Caco-2 (cell line): ENCODE measurements at regions of chr10 and their contacts with region 1.

Region 1: DNA sequence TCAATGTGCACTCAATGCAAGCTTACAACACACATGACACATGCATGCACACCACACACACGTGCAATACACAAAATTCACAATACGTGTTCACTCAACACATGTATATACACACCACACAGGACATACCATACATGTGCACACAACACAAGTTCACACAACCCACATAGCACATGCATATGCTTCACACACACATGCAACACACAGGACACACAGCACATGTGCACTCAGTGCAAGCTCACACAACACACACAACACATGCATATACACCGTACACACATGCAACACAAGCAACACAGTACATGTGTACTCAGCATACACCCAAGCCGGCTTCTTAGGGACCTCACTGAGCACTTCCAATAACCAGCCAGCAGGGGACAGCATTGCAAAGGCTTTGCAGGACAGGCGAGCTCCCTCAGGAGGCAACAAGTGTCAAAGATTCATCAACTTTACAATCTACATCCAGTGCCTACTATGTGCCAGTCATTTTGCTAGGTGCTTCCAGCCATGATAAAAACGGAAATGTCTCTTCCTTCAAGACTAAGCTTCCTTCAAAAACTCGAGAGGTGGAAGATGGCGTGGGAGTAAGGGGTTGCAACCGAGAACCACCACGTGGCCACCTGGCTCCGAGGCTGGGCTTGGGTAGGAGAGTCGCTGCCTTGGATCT is 61.1 kb downstream of the JCAD start:
- DNase-seq: peak; percentile 87 to 90
- H3K4me3 ChIP-seq: no peak overlapping the region
- H3K4me3 Mint-ChIP-seq: no peak overlapping the region
- H3K27ac Mint-ChIP-seq: no peak overlapping the region
- H3K4me1 ChIP-seq: peaks cover 40% of the 10 kb centered on the region
- H3K4me1 Mint-ChIP-seq: peaks cover 48% of the 10 kb centered on the region
- H3K27me3 ChIP-seq: no peaks in the 10 kb centered on the region
- H3K27me3 Mint-ChIP-seq: no peaks in the 10 kb centered on the region
- CTCF ChIP-seq: peak; percentile 100

Region 2: DNA sequence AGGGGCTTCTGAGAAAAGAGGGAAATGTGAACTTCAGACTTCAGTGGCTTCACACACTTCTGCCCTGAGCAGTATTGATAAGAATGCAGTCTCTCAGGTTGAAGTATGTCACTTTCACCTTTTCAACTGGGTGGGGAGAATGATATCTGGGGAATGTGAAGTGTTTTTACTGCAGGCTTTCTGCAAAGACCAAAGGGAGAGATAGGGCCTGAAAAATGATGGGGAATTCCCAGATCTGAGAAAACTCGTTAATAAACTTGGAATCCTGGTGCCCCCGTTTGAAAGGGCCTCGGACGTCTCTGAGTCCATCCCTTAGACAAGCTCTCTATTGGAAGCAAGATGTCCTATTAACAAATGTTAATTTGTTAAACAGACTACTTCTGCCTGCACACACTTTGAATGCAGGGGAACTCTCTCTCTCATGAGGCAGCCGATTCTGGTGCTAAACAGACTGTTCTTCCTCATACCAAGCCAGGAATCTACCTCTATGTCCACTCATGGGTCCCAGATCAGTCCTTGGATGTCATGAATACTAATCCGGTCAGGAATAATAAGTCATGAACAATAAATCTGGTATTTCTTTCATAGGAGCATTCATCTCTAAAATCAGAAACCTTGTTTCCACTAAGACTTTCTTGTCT is 132.5 kb before region 1 on chr10:
- CTCF ChIA-PET with region 1: interaction called, 3 read pairs
- POLR2A ChIA-PET with region 1: no interaction called
- intact Hi-C with region 1: loop called (anchors 5 kb)
- DNase-seq: peak; percentile 89 to 92
- H3K4me3 ChIP-seq: no peak overlapping the region
- H3K4me3 Mint-ChIP-seq: peak overlapping the region; percentile 42
- H3K27ac Mint-ChIP-seq: peak overlapping the region; percentile 95
- H3K4me1 ChIP-seq: peaks cover 64% of the 10 kb centered on the region
- H3K4me1 Mint-ChIP-seq: peaks cover 47% of the 10 kb centered on the region
- H3K27me3 ChIP-seq: no peaks in the 10 kb centered on the region
- H3K27me3 Mint-ChIP-seq: no peaks in the 10 kb centered on the region
- CTCF ChIP-seq: no peak

Region 3: GRCh38 chr10:29946953-29947700 is 51.1 kb before region 1 on chr10:
- CTCF ChIA-PET with region 1: no interaction called
- POLR2A ChIA-PET with region 1: no interaction called
- intact Hi-C with region 1: no loop called
- DNase-seq: peak in 1 of 2 experiments; percentile 13
- H3K4me3 ChIP-seq: no peak overlapping the region
- H3K4me3 Mint-ChIP-seq: no peak overlapping the region
- H3K27ac Mint-ChIP-seq: no peak overlapping the region
- H3K4me1 ChIP-seq: peaks cover 4% of the 10 kb centered on the region; the same call in 1 of the 2 replicates
- H3K4me1 Mint-ChIP-seq: no peaks in the 10 kb centered on the region
- H3K27me3 ChIP-seq: no peaks in the 10 kb centered on the region
- H3K27me3 Mint-ChIP-seq: no peaks in the 10 kb centered on the region
- CTCF ChIP-seq: no peak

Region 4: DNA sequence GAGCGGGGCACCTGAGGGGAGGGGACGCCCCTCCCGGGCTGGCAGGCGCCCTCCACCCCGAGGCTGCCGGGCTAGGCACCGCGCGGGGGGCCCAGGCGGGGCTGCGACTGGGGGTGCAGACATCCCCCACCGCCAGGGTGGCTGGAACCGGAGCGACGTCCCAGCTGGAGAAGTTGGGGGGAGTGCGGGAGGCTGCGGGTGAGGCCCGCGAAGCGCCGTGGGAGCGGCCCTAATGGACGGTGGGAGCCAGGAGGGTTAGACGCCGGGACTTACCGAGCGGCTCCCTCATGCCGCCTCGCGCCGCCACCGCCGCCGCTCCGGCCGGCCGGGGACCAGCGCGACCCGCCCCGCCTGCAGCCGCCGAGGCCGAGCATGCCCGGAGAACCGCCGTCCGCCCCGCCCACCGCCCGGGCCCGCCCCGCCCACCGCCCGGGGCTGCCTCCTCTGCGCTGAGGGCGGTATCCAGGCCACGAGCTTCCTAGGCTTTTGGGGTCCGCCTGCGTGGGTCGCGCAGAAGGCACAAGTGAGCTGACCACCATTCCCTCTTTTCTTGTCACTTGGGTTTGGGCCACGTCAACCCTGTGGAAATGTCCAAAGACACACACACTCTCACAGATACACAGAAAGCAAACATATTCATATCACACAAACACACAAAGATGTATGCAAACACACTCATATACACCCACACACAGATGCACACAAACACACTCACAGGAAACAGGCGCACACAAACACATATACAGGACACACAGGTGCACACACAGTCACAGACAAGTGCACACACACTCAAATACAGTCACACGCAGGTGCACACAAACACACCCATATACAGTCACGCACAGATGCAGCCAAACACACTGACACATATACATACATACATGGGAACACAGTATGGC is 61.2 kb after region 1 on chr10 and contains the start of gene JCAD:
- CTCF ChIA-PET with region 1: interaction called, 7 read pairs
- POLR2A ChIA-PET with region 1: no interaction called
- intact Hi-C with region 1: loop called (anchors 2 kb)
- DNase-seq: peak; percentile 80 to 90
- H3K4me3 ChIP-seq: peak within 1 kb of the TSS; percentile 81
- H3K4me3 Mint-ChIP-seq: peak within 1 kb of the TSS; percentile 78
- H3K27ac Mint-ChIP-seq: peak within 1 kb of the TSS; percentile 54
- H3K4me1 ChIP-seq: peaks cover 46% of the 10 kb centered on the region
- H3K4me1 Mint-ChIP-seq: peaks cover 46% of the 10 kb centered on the region
- H3K27me3 ChIP-seq: no peaks in the 10 kb centered on the region
- H3K27me3 Mint-ChIP-seq: no peaks in the 10 kb centered on the region
- CTCF ChIP-seq: no peak
- total RNA-seq, gene JCAD: 10.0 and 13.0 TPM in 2 replicates

Region 5: GRCh38 chr10:30186371-30186875 is 188.1 kb after region 1 on chr10:
- CTCF ChIA-PET with region 1: interaction called, 7 read pairs
- POLR2A ChIA-PET with region 1: no interaction called
- intact Hi-C with region 1: loop called (anchors 10 kb)
- DNase-seq: peak; percentile 29 to 54
- H3K4me3 ChIP-seq: no peak overlapping the region
- H3K4me3 Mint-ChIP-seq: no peak overlapping the region
- H3K27ac Mint-ChIP-seq: peak overlapping the region; percentile 60
- H3K4me1 ChIP-seq: peaks cover 66% of the 10 kb centered on the region
- H3K4me1 Mint-ChIP-seq: peaks cover 61% of the 10 kb centered on the region
- H3K27me3 ChIP-seq: no peaks in the 10 kb centered on the region
- H3K27me3 Mint-ChIP-seq: no peaks in the 10 kb centered on the region
- CTCF ChIP-seq: no peak

Region 6: DNA sequence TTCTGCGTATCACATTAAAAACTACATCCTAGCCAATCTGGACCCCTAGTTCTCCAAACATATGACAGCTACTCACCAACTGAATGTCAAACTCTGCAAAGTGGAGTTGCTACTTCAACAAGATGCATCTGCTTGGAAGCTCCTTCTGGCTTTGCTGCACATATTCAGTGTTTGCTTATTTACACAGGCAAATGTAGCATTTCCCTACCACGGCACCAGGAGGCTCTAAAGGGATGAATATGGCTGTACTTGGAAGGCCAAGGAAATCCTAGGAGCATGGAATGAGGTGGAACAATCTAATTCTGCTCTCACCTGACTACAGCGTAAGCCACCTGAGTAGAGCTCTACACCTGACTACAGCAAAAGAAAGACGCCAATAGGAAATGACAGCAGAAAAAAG is 311.1 kb after region 1 on chr10:
- CTCF ChIA-PET with region 1: no interaction called
- POLR2A ChIA-PET with region 1: no interaction called
- intact Hi-C with region 1: loop called (anchors 1 kb)
- DNase-seq: no peak
- H3K4me3 ChIP-seq: no peak overlapping the region
- H3K4me3 Mint-ChIP-seq: no peak overlapping the region
- H3K27ac Mint-ChIP-seq: no peak overlapping the region
- H3K4me1 ChIP-seq: no peaks in the 10 kb centered on the region
- H3K4me1 Mint-ChIP-seq: no peaks in the 10 kb centered on the region
- H3K27me3 ChIP-seq: no peaks in the 10 kb centered on the region
- H3K27me3 Mint-ChIP-seq: no peaks in the 10 kb centered on the region
- CTCF ChIP-seq: no peak

Region 7: GRCh38 chr10:30432713-30433305 is 434.5 kb after region 1 on chr10:
- CTCF ChIA-PET with region 1: no interaction called
- POLR2A ChIA-PET with region 1: no interaction called
- intact Hi-C with region 1: no loop called
- DNase-seq: peak; percentile 57 to 67
- H3K4me3 ChIP-seq: peak overlapping the region; percentile 91
- H3K4me3 Mint-ChIP-seq: peak overlapping the region; percentile 92
- H3K27ac Mint-ChIP-seq: peak overlapping the region; percentile 97
- H3K4me1 ChIP-seq: peaks cover 37% of the 10 kb centered on the region
- H3K4me1 Mint-ChIP-seq: peaks cover 46% of the 10 kb centered on the region
- H3K27me3 ChIP-seq: no peaks in the 10 kb centered on the region
- H3K27me3 Mint-ChIP-seq: no peaks in the 10 kb centered on the region
- CTCF ChIP-seq: no peak